ENCODE measurements at regions of chr11 and their contacts with region 1.

Region 1: DNA sequence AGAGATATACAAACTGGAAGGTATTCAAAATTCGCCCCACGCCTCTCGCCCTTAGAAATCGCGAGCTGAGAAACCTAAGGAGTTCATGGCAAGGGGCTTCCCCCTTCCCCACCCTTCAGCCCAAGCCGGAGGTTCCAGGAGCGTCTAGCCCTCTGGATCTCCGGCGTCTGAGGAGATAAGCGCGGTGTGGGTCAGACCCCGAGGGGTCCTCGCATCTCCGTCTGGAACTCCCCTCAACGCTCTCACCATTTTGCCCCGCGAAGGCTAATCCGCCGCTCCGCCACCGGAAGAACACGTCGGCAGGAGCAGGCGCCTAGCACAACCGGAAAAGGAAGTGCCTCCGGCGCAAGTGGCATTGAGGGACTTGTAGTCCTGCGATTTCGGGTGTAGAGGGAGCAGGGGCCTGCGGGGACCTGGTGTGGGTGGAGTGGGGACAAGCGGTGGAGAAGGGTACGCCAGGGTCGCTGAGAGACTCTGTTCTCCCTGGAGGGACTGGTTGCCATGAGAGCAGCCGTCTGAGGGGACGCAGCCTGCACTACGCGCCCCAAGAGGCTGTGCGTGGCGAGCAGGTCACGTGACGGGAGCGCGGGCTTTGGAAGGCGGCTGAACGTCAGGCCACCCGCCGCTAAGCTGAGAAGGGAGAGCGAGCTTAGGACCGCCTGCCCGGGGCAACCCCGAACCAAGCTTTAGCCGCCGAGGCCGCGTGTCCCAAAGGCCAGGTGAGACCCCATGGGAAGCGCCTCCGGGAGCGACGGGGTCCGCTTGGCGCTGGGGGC is at the starts of genes FEN1 and TMEM258:
- DNase-seq: peak; percentile 92 to 95
- ATAC-seq: peak; percentile 84 to 90
- H3K4me3 ChIP-seq: peak within 1 kb of the TSS; percentile 56
- H3K27ac ChIP-seq: peak within 1 kb of the TSS; percentile 92 to 100
- H3K4me1 ChIP-seq: peaks cover 24% of the 10 kb centered on the region; the same call in 1 of the 3 replicates
- CTCF ChIP-seq: no peak
- EP300 ChIP-seq: no peak
- POLR2A ChIP-seq: peak; percentile 79
- RAD21 ChIP-seq: no peak
- polyA plus RNA-seq, gene FEN1: 36.3 and 38.4 TPM in 2 replicates
- polyA plus RNA-seq, gene TMEM258: 280 and 375 TPM in 2 replicates

Region 2: DNA sequence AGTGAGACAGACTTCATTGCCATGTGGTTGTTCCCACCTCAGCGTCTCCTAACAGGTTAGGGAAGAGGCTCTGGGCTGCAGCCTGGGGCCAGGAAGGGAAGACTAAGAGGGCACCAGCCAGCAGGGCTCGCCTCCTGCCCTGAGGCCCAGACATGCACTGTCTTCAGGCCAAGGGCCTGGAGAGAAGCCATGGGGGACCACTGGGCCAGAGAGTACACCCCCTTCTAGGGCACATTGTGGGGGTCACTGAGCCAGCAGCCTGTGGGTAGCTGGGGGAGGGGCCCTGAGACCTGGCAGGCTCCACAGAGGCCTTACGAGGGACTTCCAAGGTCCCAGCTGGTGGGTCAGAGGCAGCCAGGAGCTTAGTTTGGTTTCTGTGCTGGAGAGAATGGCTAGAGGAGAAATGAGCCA is 65.1 kb before region 1 on chr11:
- CTCF ChIA-PET with region 1: no interaction called
- POLR2A ChIA-PET with region 1: no interaction called
- DNase-seq: no peak
- ATAC-seq: no peak
- H3K4me3 ChIP-seq: no peak overlapping the region
- H3K27ac ChIP-seq: no peak overlapping the region; a peak in 1 of 6 replicates
- H3K4me1 ChIP-seq: peaks cover 30% of the 10 kb centered on the region
- CTCF ChIP-seq: no peak
- EP300 ChIP-seq: no peak
- POLR2A ChIP-seq: no peak
- RAD21 ChIP-seq: no peak

Region 3: GRCh38 chr11:61756452-61757212 is 35.9 kb before region 1 on chr11:
- CTCF ChIA-PET with region 1: interaction called, 147 read pairs
- POLR2A ChIA-PET with region 1: interaction called, 3 read pairs
- DNase-seq: peak; percentile 89 to 94
- ATAC-seq: peak; percentile 55 to 74
- H3K4me3 ChIP-seq: peak overlapping the region; percentile 36
- H3K27ac ChIP-seq: peak overlapping the region; percentile 95 to 99
- H3K4me1 ChIP-seq: peaks cover 80% of the 10 kb centered on the region
- CTCF ChIP-seq: no peak
- EP300 ChIP-seq: peak in 1 of 2 experiments; percentile 43; a peak in 2 of 5 replicates
- POLR2A ChIP-seq: peak; percentile 30; the same call in 1 of the 2 replicates
- RAD21 ChIP-seq: no peak

Region 4: GRCh38 chr11:61803889-61804647 is 11.6 kb after region 1 on chr11:
- CTCF ChIA-PET with region 1: interaction called, 145 read pairs
- POLR2A ChIA-PET with region 1: interaction called, 3 read pairs
- DNase-seq: no peak
- ATAC-seq: no peak
- H3K4me3 ChIP-seq: no peak overlapping the region
- H3K27ac ChIP-seq: no peak overlapping the region
- H3K4me1 ChIP-seq: peaks cover 32% of the 10 kb centered on the region
- CTCF ChIP-seq: no peak
- EP300 ChIP-seq: no peak
- POLR2A ChIP-seq: no peak
- RAD21 ChIP-seq: no peak

Region 5: DNA sequence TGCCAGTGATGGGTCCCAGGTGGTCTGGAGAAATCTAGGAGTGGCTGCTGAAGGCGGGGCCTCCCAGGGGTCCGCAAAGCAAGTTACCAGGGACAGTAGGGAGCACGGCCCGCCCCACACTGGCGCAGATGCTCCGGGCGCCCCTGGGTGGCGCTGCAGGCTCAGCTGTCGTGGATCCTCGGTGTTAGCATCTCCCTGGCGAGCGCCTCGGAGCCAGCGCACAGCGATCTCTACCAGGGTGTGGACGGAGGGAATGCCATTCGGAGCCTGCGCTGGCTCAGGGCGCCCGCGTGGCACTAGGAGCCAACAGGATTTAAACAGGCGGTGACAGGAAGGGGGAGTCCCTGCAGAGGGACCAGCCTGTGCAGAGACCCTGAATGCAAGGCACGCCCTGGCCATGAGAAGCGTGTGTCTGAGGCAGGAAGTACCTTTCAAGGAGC is 78.7 kb after region 1 on chr11:
- CTCF ChIA-PET with region 1: interaction called, 27 read pairs
- POLR2A ChIA-PET with region 1: no interaction called
- DNase-seq: peak; percentile 82 to 91
- ATAC-seq: peak; percentile 80 to 93
- H3K4me3 ChIP-seq: no peak overlapping the region
- H3K27ac ChIP-seq: peak overlapping the region; percentile 47 to 52; a peak in 5 of 6 replicates
- H3K4me1 ChIP-seq: peaks cover 31% of the 10 kb centered on the region
- CTCF ChIP-seq: peak; percentile 95
- EP300 ChIP-seq: no peak
- POLR2A ChIP-seq: no peak
- RAD21 ChIP-seq: peak; percentile 95 to 97

Region 6: DNA sequence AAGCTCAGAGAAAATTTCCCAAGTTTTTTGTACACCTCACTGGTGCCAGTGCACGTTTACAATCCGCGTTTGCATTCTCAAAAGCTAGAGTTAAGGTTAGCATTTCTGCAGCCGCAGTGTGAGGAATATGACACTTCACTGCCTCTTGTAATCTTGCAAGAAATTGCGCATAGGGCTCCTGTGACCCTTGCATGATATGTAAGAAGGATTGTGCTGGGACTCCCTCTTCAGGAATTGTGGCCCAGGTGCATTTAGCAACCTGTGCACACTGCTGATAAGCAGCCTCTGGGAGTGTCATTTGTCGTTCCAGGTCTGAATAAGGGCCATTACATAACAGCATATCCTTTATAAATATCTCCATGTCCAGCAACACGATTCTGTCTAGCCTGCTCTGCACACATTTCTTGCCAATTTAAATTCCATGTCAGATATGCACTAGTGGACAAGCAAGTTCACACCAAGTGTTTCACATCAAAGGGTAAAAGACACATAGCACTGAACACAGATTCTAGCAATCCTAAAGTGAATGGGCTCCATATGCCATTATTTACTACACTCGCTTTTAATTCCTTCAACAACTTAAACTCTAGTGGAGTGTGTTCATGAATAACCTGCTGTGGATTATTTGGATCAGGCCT is 262.1 kb after region 1 on chr11:
- CTCF ChIA-PET with region 1: interaction called, 14 read pairs
- POLR2A ChIA-PET with region 1: no interaction called
- DNase-seq: peak; percentile 53 to 92
- ATAC-seq: peak; percentile 94 to 99
- H3K4me3 ChIP-seq: no peak overlapping the region
- H3K27ac ChIP-seq: peak overlapping the region; percentile 79 to 87
- H3K4me1 ChIP-seq: peaks cover 16% of the 10 kb centered on the region
- CTCF ChIP-seq: peak; percentile 91
- EP300 ChIP-seq: no peak
- POLR2A ChIP-seq: no peak
- RAD21 ChIP-seq: peak; percentile 97 to 98

Measured in A549 (cell line).